ENCODE measurements at regions of chrX and their contacts with region 1.

Region 1: GRCh38 chrX:115330498-115331168 is 41.1 kb downstream of the LUZP4 start:
- DNase-seq: peak; percentile 80

Region 2: GRCh38 chrX:115067812-115068211 is 262.8 kb before region 1 on chrX:
- CTCF ChIA-PET with region 1: no interaction called
- POLR2A ChIA-PET with region 1: no interaction called
- DNase-seq: no peak

Region 3: GRCh38 chrX:115183980-115184379 is 146.7 kb before region 1 on chrX:
- CTCF ChIA-PET with region 1: no interaction called
- POLR2A ChIA-PET with region 1: no interaction called
- DNase-seq: no peak

Region 4: GRCh38 chrX:115690511-115691216 is 360.0 kb after region 1 on chrX:
- CTCF ChIA-PET with region 1: interaction called, 11 read pairs
- POLR2A ChIA-PET with region 1: no interaction called
- DNase-seq: peak; percentile 74

Region 5: GRCh38 chrX:117120700-117121099 is 1790.1 kb after region 1 on chrX:
- CTCF ChIA-PET with region 1: no interaction called
- POLR2A ChIA-PET with region 1: no interaction called
- DNase-seq: no peak